ENCODE measurements at regions of chr11 and their contacts with region 1.

Region 1: GRCh38 chr11:35822815-35823495 is 120.9 kb upstream of the LDLRAD3 start:
- DNase-seq: peak; percentile 15
- H3K4me3 Mint-ChIP-seq: no peak overlapping the region
- H3K27ac Mint-ChIP-seq: peak overlapping the region; percentile 29
- H3K4me1 Mint-ChIP-seq: peaks cover 17% of the 10 kb centered on the region
- H3K27me3 Mint-ChIP-seq: no peaks in the 10 kb centered on the region
- CTCF ChIP-seq: no peak

Region 2: DNA sequence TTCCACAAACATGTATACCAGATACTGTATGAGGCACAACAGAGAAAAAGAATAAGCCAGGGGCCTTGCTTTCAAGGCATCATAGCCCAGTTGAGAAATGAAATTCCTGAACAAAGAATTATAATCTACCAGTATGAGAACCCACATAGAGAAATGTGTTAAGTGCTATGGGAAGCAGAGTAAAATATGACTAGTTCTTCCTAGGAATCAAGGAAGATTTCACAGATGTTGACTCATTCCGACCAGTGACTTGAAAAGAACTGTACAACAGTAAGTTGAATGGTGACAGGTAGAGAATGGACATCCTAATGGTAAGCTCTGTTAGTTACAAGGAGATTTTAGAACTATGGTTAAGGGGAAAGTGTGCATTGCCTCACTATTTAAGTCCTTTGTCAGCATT is 57.7 kb before region 1 on chr11:
- CTCF ChIA-PET with region 1: interaction called, 10 read pairs
- POLR2A ChIA-PET with region 1: no interaction called
- intact Hi-C with region 1: no loop called
- DNase-seq: no peak
- H3K4me3 Mint-ChIP-seq: no peak overlapping the region
- H3K27ac Mint-ChIP-seq: no peak overlapping the region
- H3K4me1 Mint-ChIP-seq: no peaks in the 10 kb centered on the region
- H3K27me3 Mint-ChIP-seq: no peaks in the 10 kb centered on the region
- CTCF ChIP-seq: no peak

Region 3: GRCh38 chr11:35876786-35877185 is 53.8 kb after region 1 on chr11:
- CTCF ChIA-PET with region 1: interaction called, 10 read pairs
- POLR2A ChIA-PET with region 1: no interaction called
- intact Hi-C with region 1: no loop called
- DNase-seq: no peak
- H3K4me3 Mint-ChIP-seq: no peak overlapping the region
- H3K27ac Mint-ChIP-seq: no peak overlapping the region
- H3K4me1 Mint-ChIP-seq: peaks cover 6% of the 10 kb centered on the region
- H3K27me3 Mint-ChIP-seq: no peaks in the 10 kb centered on the region
- CTCF ChIP-seq: no peak

Region 4: DNA sequence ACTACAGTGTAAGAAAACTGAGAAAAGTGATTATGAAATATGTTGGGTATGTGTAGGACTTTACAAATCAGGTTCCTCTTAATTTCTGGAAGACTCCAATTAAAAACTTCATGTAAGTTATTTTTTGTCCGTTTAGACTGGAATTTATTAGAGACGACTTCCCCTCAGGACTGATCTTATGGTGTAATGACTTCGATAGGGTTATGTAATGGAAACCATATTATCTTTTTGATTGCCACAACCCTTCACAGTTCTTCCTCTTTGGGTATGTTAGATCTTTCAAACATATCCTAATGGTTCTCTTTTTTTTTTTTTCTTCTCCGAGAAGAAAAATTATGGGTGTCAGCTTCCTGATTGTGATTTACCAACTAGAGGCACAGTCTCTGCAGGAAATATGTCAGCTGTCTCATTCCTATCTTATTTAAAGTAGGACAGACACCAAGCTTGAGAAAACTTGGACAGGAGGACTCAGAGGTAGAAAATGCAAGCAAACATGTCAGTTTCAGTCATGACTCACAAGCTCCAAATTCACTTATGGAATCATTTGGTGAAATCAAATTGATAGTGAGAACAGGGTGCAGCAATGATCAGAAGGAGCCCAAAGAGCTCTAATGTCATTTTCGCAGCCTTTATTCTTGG is 109.8 kb after region 1 on chr11:
- CTCF ChIA-PET with region 1: interaction called, 19 read pairs
- POLR2A ChIA-PET with region 1: interaction called, 7 read pairs
- intact Hi-C with region 1: no loop called
- DNase-seq: no peak
- H3K4me3 Mint-ChIP-seq: peak overlapping the region; percentile 48
- H3K27ac Mint-ChIP-seq: peak overlapping the region; percentile 84
- H3K4me1 Mint-ChIP-seq: peaks cover 16% of the 10 kb centered on the region
- H3K27me3 Mint-ChIP-seq: no peaks in the 10 kb centered on the region
- CTCF ChIP-seq: no peak

Region 5: GRCh38 chr11:36009473-36009872 is 186.5 kb after region 1 on chr11:
- CTCF ChIA-PET with region 1: interaction called, 10 read pairs
- POLR2A ChIA-PET with region 1: interaction called, 4 read pairs
- intact Hi-C with region 1: loop called (anchors 5 kb)
- DNase-seq: peak; percentile 70
- H3K4me3 Mint-ChIP-seq: peak overlapping the region; percentile 66
- H3K27ac Mint-ChIP-seq: peak overlapping the region; percentile 78
- H3K4me1 Mint-ChIP-seq: peaks cover 60% of the 10 kb centered on the region
- H3K27me3 Mint-ChIP-seq: no peaks in the 10 kb centered on the region
- CTCF ChIP-seq: no peak

Region 6: DNA sequence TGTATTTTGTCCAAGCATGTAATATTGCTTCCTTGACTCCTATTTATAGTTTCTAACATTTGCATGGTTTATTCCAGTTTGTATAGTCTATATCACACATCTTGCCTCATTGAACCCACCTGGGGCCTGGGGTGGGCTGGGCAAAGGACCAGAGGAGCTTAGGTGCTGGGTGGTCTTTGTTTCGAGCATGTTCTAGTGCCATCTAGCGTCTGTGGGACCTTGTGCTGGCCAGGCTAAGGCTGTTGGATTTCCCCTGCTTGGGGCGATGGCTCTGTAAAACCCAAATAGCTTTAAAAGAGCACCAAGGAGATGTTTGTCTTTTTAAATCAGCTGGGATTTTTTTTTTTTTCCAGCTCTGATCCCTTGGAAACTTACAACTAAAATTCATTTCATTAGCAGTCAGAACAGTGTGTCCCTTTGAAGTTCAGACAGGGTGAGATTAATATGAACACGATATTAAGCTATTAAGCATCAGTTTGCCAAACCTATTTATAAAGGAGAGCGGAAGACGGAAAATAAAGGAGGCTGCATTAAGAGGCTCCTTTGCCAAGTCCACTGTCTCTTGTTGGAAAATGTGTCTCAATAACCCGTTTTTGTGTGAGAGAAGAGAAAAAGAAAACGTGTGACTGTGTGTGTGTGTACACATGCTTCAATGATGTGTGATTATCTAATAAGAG is 308.9 kb after region 1 on chr11:
- CTCF ChIA-PET with region 1: interaction called, 9 read pairs
- POLR2A ChIA-PET with region 1: no interaction called
- intact Hi-C with region 1: loop called (anchors 5 kb)
- DNase-seq: peak; percentile 24
- H3K4me3 Mint-ChIP-seq: no peak overlapping the region
- H3K27ac Mint-ChIP-seq: peak overlapping the region; percentile 44
- H3K4me1 Mint-ChIP-seq: peaks cover 9% of the 10 kb centered on the region
- H3K27me3 Mint-ChIP-seq: no peaks in the 10 kb centered on the region
- CTCF ChIP-seq: peak; percentile 34

Measured in MCF 10A (cell line).